Activated CD4-positive, alpha-beta T cell treated with anti-CD3 and anti-CD28 coated beads for 36 hours (primary cell): ENCODE measurements at regions of chr1 and their contacts with region 1.

Region 1: GRCh38 chr1:151130987-151131586 is 15.3 kb downstream of the SEMA6C start:
- DNase-seq: peak; percentile 93
- ATAC-seq: peak; percentile 100
- H3K4me3 Mint-ChIP-seq: peak overlapping the region; percentile 68
- H3K27ac Mint-ChIP-seq: peak overlapping the region; percentile 76
- H3K4me1 Mint-ChIP-seq: peaks cover 14% of the 10 kb centered on the region
- H3K27me3 Mint-ChIP-seq: no peaks in the 10 kb centered on the region

Region 2: GRCh38 chr1:151146412-151147140 is 15.5 kb after region 1 on chr1 and contains the start of gene SEMA6C:
- CTCF ChIA-PET with region 1: interaction called, 9 read pairs
- POLR2A ChIA-PET with region 1: interaction called, 6 read pairs
- intact Hi-C with region 1: loop called in 1 of 2 experiments (anchors 1 kb)
- DNase-seq: peak; percentile 92
- ATAC-seq: peak; percentile 100
- H3K4me3 Mint-ChIP-seq: peak within 1 kb of the TSS; percentile 79
- H3K27ac Mint-ChIP-seq: peak within 1 kb of the TSS; percentile 48
- H3K4me1 Mint-ChIP-seq: peaks cover 10% of the 10 kb centered on the region
- H3K27me3 Mint-ChIP-seq: no peaks in the 10 kb centered on the region
- total RNA-seq, gene SEMA6C: 3.2 to 3.5 TPM